ENCODE measurements at regions of chr2 and their contacts with region 1.

Region 1: DNA sequence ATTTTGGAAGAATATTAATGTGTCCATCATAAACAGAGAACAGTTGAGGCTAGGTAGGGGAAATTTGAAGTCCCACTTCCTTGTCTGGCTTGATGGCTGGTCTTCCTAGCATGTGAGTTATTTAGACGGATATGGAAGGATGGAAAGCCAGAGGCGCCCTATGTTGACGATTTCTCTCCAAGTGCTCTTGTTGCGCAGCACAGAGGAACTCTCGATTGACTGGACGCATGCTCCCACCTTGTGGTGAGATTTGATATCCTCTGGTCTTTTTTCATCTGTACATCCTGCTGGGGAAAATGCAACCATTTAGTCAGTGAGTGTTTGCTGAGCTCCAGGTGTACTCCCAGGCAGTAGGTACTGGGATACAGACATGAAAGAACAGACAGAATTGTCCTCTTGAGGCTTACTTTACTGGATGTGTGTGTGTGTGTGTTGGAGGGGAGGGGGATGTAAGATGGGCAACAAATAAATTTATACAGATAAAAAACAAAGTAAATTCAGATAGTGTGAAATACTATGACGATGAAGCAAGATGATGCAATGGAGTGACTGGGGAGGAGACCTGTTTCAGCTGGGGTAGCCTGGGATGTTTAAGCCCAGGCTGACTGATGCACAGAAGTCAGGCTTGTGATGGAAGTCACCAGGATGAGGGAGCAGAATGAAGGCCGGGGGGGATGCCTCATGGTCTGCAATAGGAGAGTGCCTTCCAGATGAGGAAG is 137.2 kb downstream of the TRIM43 start:
- DNase-seq: peak; percentile 92
- H3K4me3 ChIP-seq: no peak overlapping the region
- H3K27ac ChIP-seq: no peak overlapping the region
- H3K4me1 ChIP-seq: peaks cover 0 to 4% (median 2%) of the 10 kb centered on the region in 4 donors
- H3K27me3 ChIP-seq: peaks cover 0 to 15% (median 0%) of the 10 kb centered on the region in 4 donors
- CTCF ChIP-seq: peak; percentile 68 to 78 (median 73)
- EP300 ChIP-seq: no peak
- POLR2A ChIP-seq: no peak

Region 2: GRCh38 chr2:95345566-95346230 is 383.3 kb before region 1 on chr2:
- intact Hi-C with region 1: loop called (anchors 2 kb)
- DNase-seq: no peak
- H3K4me3 ChIP-seq: peak overlapping the region; percentile 76 to 85 (median 78)
- H3K27ac ChIP-seq: peak overlapping the region; percentile 83 to 90 (median 88)
- H3K4me1 ChIP-seq: peaks cover 5 to 45% (median 29%) of the 10 kb centered on the region in 4 donors
- H3K27me3 ChIP-seq: no peaks in the 10 kb centered on the region
- CTCF ChIP-seq: peak; percentile 81 to 95 (median 85)
- EP300 ChIP-seq: no peak
- POLR2A ChIP-seq: no peak

Region 3: GRCh38 chr2:95526360-95527341 is 202.4 kb before region 1 on chr2:
- intact Hi-C with region 1: loop called (anchors 5 kb)
- DNase-seq: no peak
- H3K4me3 ChIP-seq: peak overlapping the region; percentile 65 to 88 (median 80)
- H3K27ac ChIP-seq: peak overlapping the region; percentile 77 to 85 (median 80)
- H3K4me1 ChIP-seq: peaks cover 8 to 27% (median 23%) of the 10 kb centered on the region in 4 donors
- H3K27me3 ChIP-seq: no peaks in the 10 kb centered on the region
- CTCF ChIP-seq: peak in 2 of 3 experiments; percentile 27 to 44
- EP300 ChIP-seq: no peak
- POLR2A ChIP-seq: no peak

Region 4: GRCh38 chr2:95667480-95667879 is 61.6 kb before region 1 on chr2:
- intact Hi-C with region 1: no loop called
- DNase-seq: no peak
- H3K4me3 ChIP-seq: no peak overlapping the region
- H3K27ac ChIP-seq: no peak overlapping the region
- H3K4me1 ChIP-seq: no peaks in the 10 kb centered on the region
- H3K27me3 ChIP-seq: no peaks in the 10 kb centered on the region
- CTCF ChIP-seq: no peak
- EP300 ChIP-seq: no peak
- POLR2A ChIP-seq: no peak

Region 5: GRCh38 chr2:96291751-96292150 is 562.7 kb after region 1 on chr2:
- intact Hi-C with region 1: no loop called
- DNase-seq: no peak
- H3K4me3 ChIP-seq: no peak overlapping the region
- H3K27ac ChIP-seq: no peak overlapping the region
- H3K4me1 ChIP-seq: no peaks in the 10 kb centered on the region
- H3K27me3 ChIP-seq: no peaks in the 10 kb centered on the region
- CTCF ChIP-seq: no peak
- EP300 ChIP-seq: no peak
- POLR2A ChIP-seq: no peak